B cell (primary cell): ENCODE measurements at regions of chr3 and their contacts with region 1.

Region 1: DNA sequence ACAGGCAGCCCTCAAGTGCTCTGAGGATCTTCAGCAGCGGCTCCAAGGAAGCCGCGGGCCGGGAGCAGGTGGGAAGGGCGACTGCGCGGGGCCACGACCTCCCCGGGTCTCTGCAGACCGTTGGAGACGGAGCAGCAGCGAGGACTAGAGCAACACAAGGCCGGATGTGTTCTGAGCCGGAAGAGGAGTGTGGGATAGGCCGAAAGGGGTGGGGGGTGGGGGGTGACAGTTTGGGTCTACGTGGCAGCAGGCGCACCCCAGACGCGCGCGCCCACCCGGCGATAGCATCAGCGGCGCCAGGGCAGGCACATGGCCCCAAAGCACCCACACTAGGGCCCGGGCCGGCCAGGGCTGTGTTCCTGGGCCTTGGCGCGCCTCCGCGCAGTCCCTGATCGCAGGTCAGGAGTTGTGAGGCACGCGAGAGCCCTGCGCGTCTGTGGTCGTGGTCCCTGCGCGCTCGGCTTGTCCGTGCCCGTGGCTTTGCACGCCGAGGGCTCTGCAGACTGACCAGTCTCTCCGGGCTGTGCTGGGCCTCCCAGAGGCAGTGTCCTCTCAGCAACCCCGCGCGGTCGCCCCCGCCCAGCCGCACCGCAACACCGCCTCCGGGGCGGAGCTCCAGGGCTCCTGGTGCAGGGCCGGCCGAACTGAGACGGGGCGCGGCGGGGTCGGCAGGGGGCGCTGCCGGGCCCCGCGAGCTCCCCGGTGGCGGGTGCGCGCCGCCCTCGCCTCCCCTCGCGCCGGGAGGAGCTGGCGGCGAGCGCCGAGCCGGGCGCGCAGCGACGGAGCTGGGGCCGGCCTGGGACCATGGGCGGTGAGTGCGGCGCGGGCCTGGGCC is at the start of gene PXYLP1:
- DNase-seq: peak; percentile 90
- ATAC-seq: peak; percentile 96
- H3K4me3 ChIP-seq: peak within 1 kb of the TSS; percentile 61 to 94 (median 71)
- H3K4me3 Mint-ChIP-seq: peak within 1 kb of the TSS; percentile 95
- H3K27ac ChIP-seq: peak within 1 kb of the TSS; percentile 67 to 80
- H3K27ac Mint-ChIP-seq: peak within 1 kb of the TSS; percentile 97
- H3K4me1 ChIP-seq: peaks cover 9 to 16% of the 10 kb centered on the region in 2 donors
- H3K4me1 Mint-ChIP-seq: peaks cover 18% of the 10 kb centered on the region
- H3K27me3 ChIP-seq: peaks cover 0 to 4% (median 0%) of the 10 kb centered on the region in 4 experiments
- H3K27me3 Mint-ChIP-seq: no peaks in the 10 kb centered on the region
- CTCF ChIP-seq: peak; percentile 69
- total RNA-seq, gene PXYLP1: 4.5 and 5.4 TPM in 2 replicates

Region 2: GRCh38 chr3:140941434-140942220 is 289.7 kb before region 1 on chr3 and contains the start of gene SLC25A36:
- CTCF ChIA-PET with region 1: no interaction called
- POLR2A ChIA-PET with region 1: no interaction called
- intact Hi-C with region 1: loop called (anchors 1 kb)
- DNase-seq: peak; percentile 99
- ATAC-seq: peak; percentile 96
- H3K4me3 ChIP-seq: peak within 1 kb of the TSS; percentile 63 to 86 (median 80)
- H3K4me3 Mint-ChIP-seq: peak within 1 kb of the TSS; percentile 95
- H3K27ac ChIP-seq: peak within 1 kb of the TSS; percentile 91 to 95
- H3K27ac Mint-ChIP-seq: peak within 1 kb of the TSS; percentile 97
- H3K4me1 ChIP-seq: peaks cover 11 to 26% of the 10 kb centered on the region in 2 donors
- H3K4me1 Mint-ChIP-seq: peaks cover 42% of the 10 kb centered on the region
- H3K27me3 ChIP-seq: no peaks in the 10 kb centered on the region
- H3K27me3 Mint-ChIP-seq: no peaks in the 10 kb centered on the region
- CTCF ChIP-seq: no peak
- total RNA-seq, gene SLC25A36: 76.0 and 86.3 TPM in 2 replicates

Region 3: GRCh38 chr3:141164852-141165251 is 66.5 kb before region 1 on chr3:
- CTCF ChIA-PET with region 1: no interaction called
- POLR2A ChIA-PET with region 1: no interaction called
- intact Hi-C with region 1: no loop called
- DNase-seq: no peak
- ATAC-seq: no peak
- H3K4me3 ChIP-seq: no peak overlapping the region
- H3K4me3 Mint-ChIP-seq: no peak overlapping the region
- H3K27ac ChIP-seq: no peak overlapping the region
- H3K27ac Mint-ChIP-seq: no peak overlapping the region
- H3K4me1 ChIP-seq: no peaks in the 10 kb centered on the region
- H3K4me1 Mint-ChIP-seq: no peaks in the 10 kb centered on the region
- H3K27me3 ChIP-seq: no peaks in the 10 kb centered on the region
- H3K27me3 Mint-ChIP-seq: no peaks in the 10 kb centered on the region
- CTCF ChIP-seq: no peak

Region 4: DNA sequence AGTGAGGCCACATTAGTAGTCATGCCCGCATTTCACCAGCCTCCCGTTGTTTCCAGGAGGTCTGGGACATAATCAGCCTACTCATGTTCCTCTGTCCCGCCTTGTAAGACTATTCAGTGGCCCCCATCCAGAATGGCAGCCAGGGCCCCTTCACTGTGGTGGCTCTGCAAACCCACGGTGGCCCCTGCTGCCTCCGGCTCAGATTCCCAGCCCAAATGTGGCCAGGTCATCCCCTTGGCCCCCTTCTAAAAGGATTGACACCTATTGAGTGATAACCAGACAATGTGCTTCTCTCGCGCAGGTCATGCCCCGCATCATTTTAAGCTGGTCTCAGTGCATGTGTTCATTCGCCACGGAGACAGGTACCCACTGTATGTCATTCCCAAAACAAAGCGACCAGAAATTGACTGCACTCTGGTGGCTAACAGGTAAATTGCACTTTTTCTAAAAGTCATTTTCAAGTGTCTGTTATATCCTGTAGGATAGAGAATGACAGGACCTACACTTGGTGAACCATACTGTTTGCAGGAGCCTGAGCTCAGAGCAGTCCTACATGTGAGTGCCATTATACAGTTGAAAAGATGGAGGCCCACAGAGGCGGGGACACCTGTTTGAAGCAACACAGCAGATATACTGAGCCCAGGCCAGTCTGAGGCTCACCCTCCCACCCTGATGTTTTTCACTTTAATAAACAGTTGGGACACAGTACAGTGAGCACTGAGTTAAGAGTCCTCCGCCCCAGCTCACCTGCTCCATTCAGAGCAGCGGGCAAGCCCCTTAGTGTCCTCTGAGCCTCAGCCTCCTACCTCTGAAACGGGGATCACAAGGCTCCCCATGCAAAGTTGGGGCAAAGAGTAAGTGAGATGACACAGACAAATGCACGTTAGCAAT is 48.0 kb after region 1 on chr3:
- CTCF ChIA-PET with region 1: interaction called, 11 read pairs
- POLR2A ChIA-PET with region 1: no interaction called
- intact Hi-C with region 1: loop called (anchors 2 kb)
- DNase-seq: peak; percentile 38
- ATAC-seq: peak; percentile 54
- H3K4me3 ChIP-seq: no peak overlapping the region
- H3K4me3 Mint-ChIP-seq: no peak overlapping the region
- H3K27ac ChIP-seq: no peak overlapping the region
- H3K27ac Mint-ChIP-seq: no peak overlapping the region
- H3K4me1 ChIP-seq: no peaks in the 10 kb centered on the region
- H3K4me1 Mint-ChIP-seq: peaks cover 4% of the 10 kb centered on the region
- H3K27me3 ChIP-seq: no peaks in the 10 kb centered on the region
- H3K27me3 Mint-ChIP-seq: no peaks in the 10 kb centered on the region
- CTCF ChIP-seq: peak; percentile 54

Region 5: GRCh38 chr3:141303481-141304223 is 72.3 kb after region 1 on chr3:
- CTCF ChIA-PET with region 1: interaction called, 6 read pairs
- POLR2A ChIA-PET with region 1: interaction called, 3 read pairs
- intact Hi-C with region 1: loop called (anchors 1 kb)
- DNase-seq: peak; percentile 83
- ATAC-seq: peak; percentile 78
- H3K4me3 ChIP-seq: no peak overlapping the region
- H3K4me3 Mint-ChIP-seq: no peak overlapping the region
- H3K27ac ChIP-seq: no peak overlapping the region
- H3K27ac Mint-ChIP-seq: no peak overlapping the region
- H3K4me1 ChIP-seq: peaks cover 0 to 5% of the 10 kb centered on the region in 2 donors
- H3K4me1 Mint-ChIP-seq: no peaks in the 10 kb centered on the region
- H3K27me3 ChIP-seq: no peaks in the 10 kb centered on the region
- H3K27me3 Mint-ChIP-seq: no peaks in the 10 kb centered on the region
- CTCF ChIP-seq: peak; percentile 84

Region 6: DNA sequence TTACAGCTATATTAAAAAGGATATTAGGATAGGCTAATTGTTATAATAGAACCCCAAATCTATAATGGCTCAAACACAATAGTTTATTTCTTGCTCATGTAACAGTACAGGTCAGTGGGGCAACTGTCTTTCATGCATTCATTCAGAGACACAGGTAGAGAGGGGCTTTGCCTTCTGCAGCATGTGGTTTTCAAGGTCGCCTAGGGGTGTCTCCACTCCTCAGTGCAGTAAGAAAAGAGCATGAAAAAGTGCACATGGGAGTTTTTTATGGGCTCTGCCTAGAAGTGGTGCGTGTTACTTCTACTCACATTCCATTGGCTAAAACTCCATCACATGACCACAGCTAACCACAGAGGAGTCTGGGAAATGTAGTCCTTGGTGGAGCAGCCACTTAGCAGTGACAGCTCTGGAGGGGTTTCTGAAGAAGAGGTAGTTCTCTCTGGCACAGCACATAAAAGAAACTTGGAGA is 138.8 kb after region 1 on chr3:
- CTCF ChIA-PET with region 1: interaction called, 3 read pairs
- POLR2A ChIA-PET with region 1: no interaction called
- intact Hi-C with region 1: loop called (anchors 1 kb)
- DNase-seq: peak; percentile 91
- ATAC-seq: peak; percentile 98
- H3K4me3 ChIP-seq: no peak overlapping the region
- H3K4me3 Mint-ChIP-seq: peak overlapping the region; percentile 5
- H3K27ac ChIP-seq: peak overlapping the region in 1 of 2 donors; percentile 42
- H3K27ac Mint-ChIP-seq: peak overlapping the region; percentile 62
- H3K4me1 ChIP-seq: peaks cover 4 to 8% of the 10 kb centered on the region in 2 donors
- H3K4me1 Mint-ChIP-seq: peaks cover 20% of the 10 kb centered on the region
- H3K27me3 ChIP-seq: no peaks in the 10 kb centered on the region
- H3K27me3 Mint-ChIP-seq: no peaks in the 10 kb centered on the region
- CTCF ChIP-seq: peak; percentile 69

Region 7: DNA sequence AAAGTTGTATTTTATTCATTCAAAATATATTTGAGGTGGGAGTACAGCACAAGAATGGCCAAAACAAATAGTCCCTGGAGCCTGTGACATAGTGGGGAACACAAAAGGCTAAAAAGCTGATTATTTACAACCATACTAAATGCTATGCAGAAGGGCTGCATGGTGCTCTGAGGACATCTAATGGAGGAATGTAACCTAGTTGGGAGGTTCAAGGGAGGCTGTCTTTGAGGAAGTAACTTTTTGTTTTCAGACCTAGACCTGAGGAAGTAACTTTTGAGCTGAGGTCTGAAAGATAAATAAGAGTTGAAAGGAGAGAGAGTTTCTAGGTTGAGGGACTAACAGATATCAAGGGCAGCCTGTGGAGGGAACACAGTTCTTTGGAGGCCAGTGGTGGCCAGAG is 220.7 kb after region 1 on chr3:
- CTCF ChIA-PET with region 1: interaction called, 17 read pairs
- POLR2A ChIA-PET with region 1: no interaction called
- intact Hi-C with region 1: loop called (anchors 10 kb)
- DNase-seq: peak; percentile 79
- ATAC-seq: peak; percentile 85
- H3K4me3 ChIP-seq: no peak overlapping the region
- H3K4me3 Mint-ChIP-seq: no peak overlapping the region
- H3K27ac ChIP-seq: peak overlapping the region; percentile 55 to 77
- H3K27ac Mint-ChIP-seq: no peak overlapping the region
- H3K4me1 ChIP-seq: peaks cover 12 to 16% of the 10 kb centered on the region in 2 donors
- H3K4me1 Mint-ChIP-seq: peaks cover 7% of the 10 kb centered on the region
- H3K27me3 ChIP-seq: no peaks in the 10 kb centered on the region
- H3K27me3 Mint-ChIP-seq: no peaks in the 10 kb centered on the region
- CTCF ChIP-seq: peak; percentile 73